ENCODE measurements at regions of chr11 and their contacts with region 1.

Region 1: DNA sequence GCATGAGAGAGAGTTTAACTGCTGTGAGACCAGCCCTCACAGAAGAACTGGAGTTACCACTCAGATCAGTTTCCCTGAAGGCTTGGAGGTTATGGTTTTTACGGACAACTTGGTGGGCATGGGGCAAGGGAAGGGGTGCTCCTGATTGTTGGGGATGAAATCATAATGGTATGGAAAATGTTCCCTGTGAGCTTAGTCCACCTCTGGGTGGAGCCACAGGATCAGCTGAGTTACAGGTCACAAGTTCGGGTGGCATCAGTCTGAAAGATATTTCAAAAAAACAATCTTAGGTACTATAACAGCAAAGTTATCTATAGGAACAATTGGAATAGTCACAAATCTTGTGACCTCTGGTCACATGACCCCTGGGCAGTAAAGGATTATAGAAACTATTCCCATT is 162.9 kb downstream of the DLG2 start:
- DNase-seq: no peak
- ATAC-seq: no peak

Region 2: GRCh38 chr11:85495918-85496317 is 31.6 kb after region 1 on chr11:
- intact Hi-C with region 1: no loop called
- DNase-seq: no peak
- ATAC-seq: no peak

Region 3: GRCh38 chr11:85595285-85595884 is 131.1 kb after region 1 on chr11:
- intact Hi-C with region 1: loop called (anchors 2 kb)
- DNase-seq: no peak
- ATAC-seq: peak; percentile 54

Region 4: GRCh38 chr11:85682330-85683305 is 218.3 kb after region 1 on chr11:
- intact Hi-C with region 1: no loop called
- DNase-seq: peak; percentile 83
- ATAC-seq: peak; percentile 64

Measured in Right ventricle myocardium inferior (tissue), 1 donor.